ENCODE measurements at regions of chr9 and their contacts with region 1.

Region 1: GRCh38 chr9:98551511-98552286 is 157.0 kb downstream of the GABBR2 start:
- DNase-seq: no peak
- H3K4me3 ChIP-seq: no peak overlapping the region
- H3K4me3 Mint-ChIP-seq: no peak overlapping the region
- H3K27ac ChIP-seq: no peak overlapping the region
- H3K27ac Mint-ChIP-seq: no peak overlapping the region
- H3K4me1 ChIP-seq: no peaks in the 10 kb centered on the region
- H3K4me1 Mint-ChIP-seq: no peaks in the 10 kb centered on the region
- H3K27me3 ChIP-seq: no peaks in the 10 kb centered on the region
- H3K27me3 Mint-ChIP-seq: peaks cover 2 to 10% of the 10 kb centered on the region in 2 donors

Region 2: DNA sequence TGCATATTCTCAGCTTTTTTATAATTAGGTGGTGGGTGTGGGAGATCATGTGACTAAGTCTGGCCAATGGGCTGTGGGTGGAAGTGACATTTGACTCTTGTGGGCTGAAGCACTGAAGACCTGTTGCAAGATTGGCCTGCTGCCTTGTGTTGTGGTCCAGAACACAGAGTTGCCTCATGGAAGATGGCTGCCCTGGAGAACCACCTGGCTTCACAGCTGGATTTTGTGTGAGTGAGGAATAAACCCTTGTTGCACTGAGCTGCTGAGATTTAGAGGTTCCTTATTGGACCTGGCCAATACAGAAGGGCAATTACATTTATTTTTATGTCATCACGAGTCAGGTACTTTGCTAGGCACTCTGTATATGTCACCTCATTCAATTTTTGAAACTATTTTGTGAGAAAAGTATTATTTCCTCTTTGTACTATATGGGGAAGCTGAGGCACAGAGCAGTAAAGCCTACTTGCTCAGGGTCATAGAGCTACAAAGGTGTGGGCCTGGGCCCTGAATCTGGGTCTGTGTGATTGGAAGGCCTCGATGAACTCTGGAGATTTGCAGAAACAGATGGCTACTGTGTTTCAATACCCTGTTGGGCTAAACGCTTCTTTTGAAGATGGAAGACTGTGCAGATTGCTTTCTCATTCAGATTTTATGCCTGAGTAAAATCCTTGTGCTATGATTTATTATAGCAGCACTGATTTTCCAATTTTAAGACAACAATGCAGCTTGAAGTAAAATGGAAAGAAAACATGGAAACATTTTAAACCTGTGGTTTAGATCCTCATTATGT is 225.0 kb before region 1 on chr9:
- CTCF ChIA-PET with region 1: no interaction called
- POLR2A ChIA-PET with region 1: no interaction called
- intact Hi-C with region 1: no loop called
- DNase-seq: peak in 1 of 5 donors; percentile 23
- H3K4me3 ChIP-seq: no peak overlapping the region
- H3K4me3 Mint-ChIP-seq: no peak overlapping the region
- H3K27ac ChIP-seq: no peak overlapping the region
- H3K27ac Mint-ChIP-seq: no peak overlapping the region
- H3K4me1 ChIP-seq: no peaks in the 10 kb centered on the region
- H3K4me1 Mint-ChIP-seq: peaks cover 0 to 5% (median 0%) of the 10 kb centered on the region in 4 donors
- H3K27me3 ChIP-seq: no peaks in the 10 kb centered on the region
- H3K27me3 Mint-ChIP-seq: peaks cover 13 to 14% of the 10 kb centered on the region in 2 donors

Region 3: GRCh38 chr9:98766586-98766985 is 214.9 kb after region 1 on chr9:
- CTCF ChIA-PET with region 1: no interaction called
- POLR2A ChIA-PET with region 1: no interaction called
- intact Hi-C with region 1: loop called (anchors 10 kb)
- DNase-seq: no peak
- H3K4me3 ChIP-seq: no peak overlapping the region
- H3K4me3 Mint-ChIP-seq: no peak overlapping the region
- H3K27ac ChIP-seq: no peak overlapping the region
- H3K27ac Mint-ChIP-seq: no peak overlapping the region
- H3K4me1 ChIP-seq: no peaks in the 10 kb centered on the region
- H3K4me1 Mint-ChIP-seq: no peaks in the 10 kb centered on the region
- H3K27me3 ChIP-seq: no peaks in the 10 kb centered on the region
- H3K27me3 Mint-ChIP-seq: no peaks in the 10 kb centered on the region